WTC11 (cell line): ENCODE measurements at regions of chr17 and their contacts with region 1.

Region 1: DNA sequence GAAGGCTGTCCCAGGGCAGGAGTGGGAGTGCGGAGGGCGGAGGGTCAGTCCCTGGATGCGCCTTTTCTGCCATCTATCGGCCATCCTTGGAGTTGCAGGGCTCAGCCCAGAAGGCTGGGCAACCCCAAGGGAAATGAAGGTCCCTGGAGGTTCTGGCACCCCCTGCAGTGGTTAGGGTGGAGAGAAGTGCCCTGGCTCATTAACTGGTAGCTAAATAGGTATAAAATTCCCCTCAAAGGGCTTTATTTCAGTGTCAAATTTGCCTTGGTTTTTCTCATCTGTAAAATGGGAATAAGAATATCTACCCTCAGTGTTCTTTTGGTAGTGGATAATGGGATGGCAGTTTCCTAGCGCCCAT is 22.4 kb downstream of the C17orf75 start:
- DNase-seq: peak; percentile 93
- ATAC-seq: peak; percentile 86
- H3K4me3 Mint-ChIP-seq: no peak overlapping the region
- H3K27ac Mint-ChIP-seq: no peak overlapping the region
- H3K4me1 Mint-ChIP-seq: peaks cover 35% of the 10 kb centered on the region
- H3K27me3 Mint-ChIP-seq: no peaks in the 10 kb centered on the region
- CTCF ChIP-seq: peak; percentile 94

Region 2: GRCh38 chr17:32215696-32216095 is 103.8 kb before region 1 on chr17:
- CTCF ChIA-PET with region 1: no interaction called
- POLR2A ChIA-PET with region 1: no interaction called
- DNase-seq: no peak
- ATAC-seq: no peak
- H3K4me3 Mint-ChIP-seq: no peak overlapping the region
- H3K27ac Mint-ChIP-seq: no peak overlapping the region
- H3K4me1 Mint-ChIP-seq: no peaks in the 10 kb centered on the region
- H3K27me3 Mint-ChIP-seq: no peaks in the 10 kb centered on the region
- CTCF ChIP-seq: no peak

Region 3: DNA sequence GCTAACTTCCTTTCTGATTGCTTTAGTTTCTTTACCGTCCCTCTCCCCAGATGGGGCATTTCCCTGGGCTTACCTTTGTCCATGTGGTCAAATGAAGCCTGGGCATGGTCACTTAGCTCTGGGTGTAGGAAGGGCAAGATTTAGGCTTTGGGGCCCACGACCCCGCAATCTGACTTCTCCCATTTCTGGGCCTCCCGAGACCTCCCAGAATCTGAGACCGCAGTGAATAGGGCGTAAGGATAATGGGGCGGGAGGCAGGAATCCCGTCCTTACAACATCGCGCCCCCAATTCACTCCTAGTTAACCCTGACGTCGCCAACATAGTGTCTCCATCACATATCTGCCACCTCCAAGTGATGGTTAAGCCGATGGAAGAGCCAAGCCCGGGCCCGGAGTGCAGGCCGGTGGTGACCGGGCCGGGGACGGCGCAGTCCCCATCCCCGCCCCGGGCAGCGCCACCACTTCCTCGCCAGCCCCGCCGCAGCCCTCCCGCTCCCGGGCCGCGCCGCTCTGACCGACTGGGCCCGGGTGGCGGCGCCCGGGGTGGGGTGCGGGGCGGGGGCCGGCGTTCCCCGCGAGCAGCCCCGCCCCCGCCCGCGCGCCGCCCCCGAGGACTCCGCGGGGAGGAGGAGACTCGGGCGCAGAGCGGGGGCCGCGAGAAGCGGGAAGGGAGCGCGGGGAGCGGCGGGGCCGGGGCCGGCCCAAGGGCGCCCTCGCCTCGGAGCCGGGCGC is 54.2 kb before region 1 on chr17 and contains the start of gene RHBDL3:
- CTCF ChIA-PET with region 1: interaction called, 20 read pairs
- POLR2A ChIA-PET with region 1: no interaction called
- DNase-seq: peak; percentile 36
- ATAC-seq: peak; percentile 31
- H3K4me3 Mint-ChIP-seq: peak within 1 kb of the TSS; percentile 78
- H3K27ac Mint-ChIP-seq: no peak within 1 kb of the TSS
- H3K4me1 Mint-ChIP-seq: peaks cover 40% of the 10 kb centered on the region
- H3K27me3 Mint-ChIP-seq: peaks cover 51% of the 10 kb centered on the region
- CTCF ChIP-seq: no peak
- total RNA-seq, gene RHBDL3: 11.3 to 13.2 TPM (median 11.6 TPM) in 3 replicates

Region 4: GRCh38 chr17:32275060-32276042 is 44.2 kb before region 1 on chr17:
- CTCF ChIA-PET with region 1: interaction called, 15 read pairs
- POLR2A ChIA-PET with region 1: no interaction called
- DNase-seq: peak; percentile 54
- ATAC-seq: peak; percentile 32
- H3K4me3 Mint-ChIP-seq: no peak overlapping the region
- H3K27ac Mint-ChIP-seq: no peak overlapping the region
- H3K4me1 Mint-ChIP-seq: peaks cover 64% of the 10 kb centered on the region
- H3K27me3 Mint-ChIP-seq: peaks cover 7% of the 10 kb centered on the region
- CTCF ChIP-seq: no peak

Region 5: GRCh38 chr17:32281011-32281451 is 38.5 kb before region 1 on chr17:
- CTCF ChIA-PET with region 1: interaction called, 28 read pairs
- POLR2A ChIA-PET with region 1: no interaction called
- DNase-seq: peak; percentile 67
- ATAC-seq: peak; percentile 34
- H3K4me3 Mint-ChIP-seq: no peak overlapping the region
- H3K27ac Mint-ChIP-seq: no peak overlapping the region
- H3K4me1 Mint-ChIP-seq: peaks cover 51% of the 10 kb centered on the region
- H3K27me3 Mint-ChIP-seq: peaks cover 5% of the 10 kb centered on the region; the same call in 1 of the 2 replicates
- CTCF ChIP-seq: no peak

Region 6: GRCh38 chr17:32288615-32289014 is 30.9 kb before region 1 on chr17:
- CTCF ChIA-PET with region 1: interaction called, 28 read pairs
- POLR2A ChIA-PET with region 1: interaction called, 4 read pairs
- DNase-seq: no peak
- ATAC-seq: peak; percentile 7; the same call in 1 of the 2 replicates
- H3K4me3 Mint-ChIP-seq: peak overlapping the region; percentile 13; the same call in 1 of the 2 replicates
- H3K27ac Mint-ChIP-seq: peak overlapping the region; percentile 96
- H3K4me1 Mint-ChIP-seq: peaks cover 62% of the 10 kb centered on the region
- H3K27me3 Mint-ChIP-seq: no peaks in the 10 kb centered on the region; the same call in 1 of the 2 replicates
- CTCF ChIP-seq: no peak